ENCODE measurements at regions of chr9 and their contacts with region 1.

Region 1: GRCh38 chr9:78121488-78121887 is 89.9 kb upstream of the GNAQ start:
- DNase-seq: peak; percentile 60 to 92 (median 82)

Region 2: DNA sequence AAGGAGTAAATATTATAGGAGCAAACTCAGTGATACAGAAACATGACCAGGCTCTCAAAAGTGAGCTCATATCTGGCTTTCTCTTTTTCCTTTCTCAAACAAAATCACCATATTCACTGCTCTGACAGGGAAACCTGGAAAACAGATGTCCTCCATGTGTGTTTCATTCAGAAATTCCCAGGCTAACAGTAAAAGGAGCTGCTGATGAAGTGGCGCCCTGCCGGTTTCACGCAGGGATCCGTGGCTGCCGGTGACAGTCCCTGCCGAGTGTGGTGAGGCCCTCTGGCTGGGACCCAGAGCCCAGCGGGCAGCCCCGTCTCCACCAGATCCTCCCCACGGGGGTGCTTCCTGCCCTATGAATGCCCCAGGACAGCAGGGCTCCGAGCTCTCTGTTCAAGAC is 681.4 kb before region 1 on chr9:
- intact Hi-C with region 1: loop called (anchors 10 kb)
- DNase-seq: peak in 32 of 42 donors; percentile 16 to 70 (median 37)

Region 3: GRCh38 chr9:78296893-78297671 is 175.6 kb after region 1 on chr9 and contains the start of gene PSAT1:
- intact Hi-C with region 1: loop called (anchors 10 kb)
- DNase-seq: peak; percentile 87 to 98 (median 94)

Region 4: GRCh38 chr9:78424299-78424698 is 302.8 kb after region 1 on chr9:
- intact Hi-C with region 1: no loop called
- DNase-seq: no peak

Measured in head of caudate nucleus (tissue), 42 donors.